Activated CD8-positive, alpha-beta T cell treated with anti-CD3 and anti-CD28 coated beads, Interleukin-2, amount 10 ng/mL, durations not matched to agents 7 days and 5 days (primary cell): ENCODE measurements at regions of chr1 and their contacts with region 1.

Region 1: GRCh38 chr1:209627732-209628196 is 24.5 kb downstream of the LAMB3 start:
- DNase-seq: peak; percentile 83
- ATAC-seq: peak; percentile 89
- H3K4me3 Mint-ChIP-seq: no peak overlapping the region
- H3K27ac Mint-ChIP-seq: no peak overlapping the region
- H3K4me1 Mint-ChIP-seq: no peaks in the 10 kb centered on the region
- H3K27me3 Mint-ChIP-seq: no peaks in the 10 kb centered on the region

Region 2: GRCh38 chr1:209576798-209577197 is 51.0 kb before region 1 on chr1:
- CTCF ChIA-PET with region 1: interaction called, 16 read pairs
- POLR2A ChIA-PET with region 1: no interaction called
- DNase-seq: peak; percentile 71
- ATAC-seq: peak; percentile 92
- H3K4me3 Mint-ChIP-seq: no peak overlapping the region
- H3K27ac Mint-ChIP-seq: no peak overlapping the region
- H3K4me1 Mint-ChIP-seq: no peaks in the 10 kb centered on the region
- H3K27me3 Mint-ChIP-seq: peaks cover 27% of the 10 kb centered on the region

Region 3: GRCh38 chr1:209617047-209617673 is 10.6 kb before region 1 on chr1:
- CTCF ChIA-PET with region 1: interaction called, 15 read pairs
- POLR2A ChIA-PET with region 1: no interaction called
- DNase-seq: no peak
- ATAC-seq: no peak
- H3K4me3 Mint-ChIP-seq: no peak overlapping the region
- H3K27ac Mint-ChIP-seq: no peak overlapping the region
- H3K4me1 Mint-ChIP-seq: peaks cover 10% of the 10 kb centered on the region
- H3K27me3 Mint-ChIP-seq: peaks cover 3% of the 10 kb centered on the region

Region 4: GRCh38 chr1:209659909-209660308 is 32.1 kb after region 1 on chr1:
- CTCF ChIA-PET with region 1: no interaction called
- POLR2A ChIA-PET with region 1: no interaction called
- DNase-seq: no peak
- ATAC-seq: no peak
- H3K4me3 Mint-ChIP-seq: no peak overlapping the region
- H3K27ac Mint-ChIP-seq: no peak overlapping the region
- H3K4me1 Mint-ChIP-seq: peaks cover 9% of the 10 kb centered on the region
- H3K27me3 Mint-ChIP-seq: peaks cover 6% of the 10 kb centered on the region

Region 5: GRCh38 chr1:209710093-209710492 is 82.3 kb after region 1 on chr1:
- CTCF ChIA-PET with region 1: no interaction called
- POLR2A ChIA-PET with region 1: no interaction called
- DNase-seq: no peak
- ATAC-seq: no peak
- H3K4me3 Mint-ChIP-seq: no peak overlapping the region
- H3K27ac Mint-ChIP-seq: no peak overlapping the region
- H3K4me1 Mint-ChIP-seq: peaks cover 4% of the 10 kb centered on the region
- H3K27me3 Mint-ChIP-seq: no peaks in the 10 kb centered on the region

Region 6: DNA sequence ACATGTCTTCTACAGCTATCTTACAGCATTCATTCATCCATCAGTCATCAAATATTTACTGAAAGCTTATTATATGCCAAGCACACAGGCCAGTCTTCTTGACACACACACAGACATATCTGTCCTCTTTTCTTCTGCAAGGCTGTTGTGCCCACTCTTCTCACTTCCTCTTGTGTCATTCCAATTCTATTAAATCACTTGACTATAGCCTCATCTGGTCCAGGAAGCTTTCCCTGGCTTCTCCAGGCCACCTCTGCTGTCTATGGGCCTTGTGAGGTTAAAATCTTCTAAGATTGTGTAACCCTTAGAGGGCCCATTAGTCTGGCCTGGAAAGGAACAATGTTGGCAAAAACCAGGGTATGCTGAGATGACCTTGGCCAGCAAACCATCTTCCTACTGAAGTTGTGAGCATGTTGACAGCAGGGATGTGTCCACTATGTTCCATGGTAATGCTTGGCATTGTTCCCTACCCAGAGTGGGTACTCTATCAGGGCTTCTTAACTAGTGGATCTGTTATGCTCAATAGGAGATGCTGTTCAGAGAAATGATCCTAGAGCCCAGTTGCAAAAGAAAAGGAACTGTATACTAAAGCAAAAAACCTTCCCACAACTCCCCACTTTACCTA is 133.4 kb after region 1 on chr1:
- CTCF ChIA-PET with region 1: no interaction called
- POLR2A ChIA-PET with region 1: no interaction called
- DNase-seq: no peak
- ATAC-seq: no peak
- H3K4me3 Mint-ChIP-seq: peak overlapping the region; percentile 59
- H3K27ac Mint-ChIP-seq: peak overlapping the region; percentile 77
- H3K4me1 Mint-ChIP-seq: peaks cover 73% of the 10 kb centered on the region
- H3K27me3 Mint-ChIP-seq: no peaks in the 10 kb centered on the region